K562 (cell line): ENCODE measurements at regions of chr10 and their contacts with region 1.

Region 1: DNA sequence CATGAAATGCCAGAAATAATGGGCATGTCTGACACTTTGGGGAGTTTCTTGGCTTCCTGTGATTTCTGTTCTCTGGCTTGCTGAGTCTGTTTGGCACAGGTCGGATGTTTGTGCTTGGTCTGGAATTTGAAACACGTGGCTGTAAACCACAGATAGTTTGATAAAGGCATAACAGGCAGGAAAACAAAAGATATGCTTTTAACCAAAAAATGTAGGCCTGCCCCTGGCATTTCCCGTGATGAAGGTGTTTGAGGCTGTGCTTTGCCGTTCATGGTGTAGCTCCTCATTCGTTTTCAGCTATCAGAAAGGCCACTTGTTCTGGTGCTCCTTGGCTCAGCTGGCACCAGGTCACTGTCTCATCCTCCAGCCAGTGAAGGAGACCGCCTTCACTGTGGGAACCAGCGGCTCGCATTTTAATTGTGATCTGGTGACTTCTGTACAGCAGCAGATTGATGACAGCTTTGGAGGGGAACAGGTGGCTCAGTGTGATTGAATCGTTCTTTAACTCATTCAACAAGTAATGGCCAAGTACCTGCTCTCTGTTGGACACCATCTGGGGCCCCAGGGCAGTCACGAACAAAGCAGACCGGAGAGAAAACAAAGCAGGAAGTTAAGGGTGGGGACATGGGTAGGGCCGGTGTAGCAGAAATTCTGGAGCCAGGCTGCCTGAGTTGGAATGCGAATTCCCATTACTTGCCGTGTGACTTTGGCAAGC is 111.5 kb downstream of the CCNY start:
- DNase-seq: peak; percentile 30 to 55 (median 46)
- ATAC-seq: peak; percentile 50
- H3K4me3 ChIP-seq: no peak overlapping the region
- H3K27ac ChIP-seq: peak overlapping the region; percentile 33; the same call in 2 of the 3 replicates
- H3K4me1 ChIP-seq: peaks cover 36 to 61% of the 10 kb centered on the region in 2 experiments
- H3K27me3 ChIP-seq: no peaks in the 10 kb centered on the region
- CTCF ChIP-seq: no peak
- EP300 ChIP-seq: no peak
- POLR2A ChIP-seq: no peak
- RAD21 ChIP-seq: no peak

Region 2: DNA sequence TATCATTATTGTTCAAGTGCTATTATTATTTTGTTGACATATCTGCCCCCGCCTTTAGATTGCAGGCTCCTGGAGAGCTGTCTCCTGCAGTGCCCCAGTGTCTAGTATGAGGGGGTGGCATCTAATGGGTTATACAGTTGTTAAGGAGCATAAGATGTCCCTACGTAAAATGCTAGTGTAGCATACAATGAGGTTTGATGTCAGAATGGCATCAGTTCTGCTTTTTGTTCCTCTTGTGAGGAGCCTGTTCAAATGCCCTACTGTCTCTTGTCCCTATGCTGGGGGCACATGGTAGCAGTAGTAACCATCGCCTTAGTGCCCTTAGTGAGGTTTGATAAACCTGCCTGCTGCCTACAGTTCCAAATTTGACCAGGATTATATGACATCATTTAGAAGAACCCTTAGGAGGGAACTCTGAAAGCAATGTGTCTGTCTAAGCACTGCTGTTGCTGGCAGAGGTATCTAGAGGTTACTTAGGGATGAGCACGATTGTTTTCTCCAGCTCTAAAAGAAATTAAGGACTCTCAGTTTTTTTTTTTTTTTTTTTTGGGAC is 311.5 kb before region 1 on chr10:
- CTCF ChIA-PET with region 1: no interaction called
- POLR2A ChIA-PET with region 1: no interaction called
- in situ Hi-C with region 1: no loop called
- intact Hi-C with region 1: no loop called
- DNase-seq: no peak
- ATAC-seq: peak; percentile 36
- H3K4me3 ChIP-seq: no peak overlapping the region
- H3K27ac ChIP-seq: no peak overlapping the region
- H3K4me1 ChIP-seq: peaks cover 2 to 11% of the 10 kb centered on the region in 2 experiments; a peak in 3 of 5 replicates
- H3K27me3 ChIP-seq: no peaks in the 10 kb centered on the region
- CTCF ChIP-seq: no peak
- EP300 ChIP-seq: no peak
- POLR2A ChIP-seq: no peak
- RAD21 ChIP-seq: no peak

Region 3: DNA sequence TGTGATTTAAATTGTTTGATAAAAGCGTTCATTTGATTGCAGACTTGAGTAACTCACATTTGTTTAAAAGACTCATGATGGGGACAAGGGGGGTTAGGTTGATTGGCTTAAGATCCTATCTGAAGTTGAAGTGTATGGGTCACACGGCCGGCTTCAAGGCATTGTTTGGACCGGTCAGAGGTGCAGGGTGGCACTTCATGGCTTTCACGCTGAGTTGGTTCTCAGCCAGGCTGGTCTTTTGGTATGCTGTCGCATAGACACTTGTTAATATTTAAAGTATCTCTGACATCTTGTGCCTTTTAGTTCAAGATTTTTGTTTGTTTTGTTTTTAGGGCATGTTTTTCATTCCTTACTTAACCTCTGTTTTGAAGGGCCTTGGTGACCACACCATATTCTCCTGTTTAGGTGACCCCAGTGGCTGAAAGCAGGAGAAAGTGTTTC is 53.4 kb before region 1 on chr10:
- CTCF ChIA-PET with region 1: no interaction called
- POLR2A ChIA-PET with region 1: no interaction called
- in situ Hi-C with region 1: no loop called
- intact Hi-C with region 1: loop called (anchors 5 kb)
- DNase-seq: no peak
- ATAC-seq: no peak
- H3K4me3 ChIP-seq: no peak overlapping the region
- H3K27ac ChIP-seq: peak overlapping the region; percentile 23; the same call in 1 of the 3 replicates
- H3K4me1 ChIP-seq: peaks cover 25 to 97% of the 10 kb centered on the region in 2 experiments
- H3K27me3 ChIP-seq: no peaks in the 10 kb centered on the region
- CTCF ChIP-seq: no peak
- EP300 ChIP-seq: no peak
- POLR2A ChIP-seq: no peak
- RAD21 ChIP-seq: no peak

Region 4: GRCh38 chr10:35412900-35413491 is 34.9 kb before region 1 on chr10:
- CTCF ChIA-PET with region 1: no interaction called
- POLR2A ChIA-PET with region 1: no interaction called
- in situ Hi-C with region 1: no loop called
- intact Hi-C with region 1: loop called (anchors 5 kb)
- DNase-seq: peak in 3 of 4 experiments; percentile 33 to 72 (median 69)
- ATAC-seq: peak; percentile 63
- H3K4me3 ChIP-seq: 0 out of 2 replicates have a peak overlapping the region, but pooled peaks have one; percentile 4
- H3K27ac ChIP-seq: peak overlapping the region; percentile 76
- H3K4me1 ChIP-seq: peaks cover 24 to 46% of the 10 kb centered on the region in 2 experiments
- H3K27me3 ChIP-seq: no peaks in the 10 kb centered on the region
- CTCF ChIP-seq: no peak
- EP300 ChIP-seq: peak; percentile 40; the same call in 1 of the 2 replicates
- POLR2A ChIP-seq: no peak
- RAD21 ChIP-seq: no peak